Caki2 (cell line): ENCODE measurements at regions of chr12 and their contacts with region 1.

Region 1: DNA sequence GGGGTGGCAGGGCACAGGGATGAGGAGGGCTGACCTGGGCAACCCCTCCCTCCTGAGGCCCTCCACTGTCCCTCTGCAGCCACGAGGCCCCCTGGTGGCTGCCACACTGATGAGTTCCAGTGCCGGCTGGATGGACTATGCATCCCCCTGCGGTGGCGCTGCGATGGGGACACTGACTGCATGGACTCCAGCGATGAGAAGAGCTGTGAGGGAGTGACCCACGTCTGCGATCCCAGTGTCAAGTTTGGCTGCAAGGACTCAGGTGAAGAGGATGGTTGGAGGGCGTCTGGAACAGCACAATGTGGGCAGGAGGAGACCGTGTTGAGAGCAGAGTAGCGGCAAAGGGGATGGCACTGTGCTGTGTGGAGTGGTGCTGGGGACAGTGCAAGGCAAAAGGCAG is 25.7 kb upstream of the LRP1-AS start:
- DNase-seq: peak; percentile 23

Region 2: DNA sequence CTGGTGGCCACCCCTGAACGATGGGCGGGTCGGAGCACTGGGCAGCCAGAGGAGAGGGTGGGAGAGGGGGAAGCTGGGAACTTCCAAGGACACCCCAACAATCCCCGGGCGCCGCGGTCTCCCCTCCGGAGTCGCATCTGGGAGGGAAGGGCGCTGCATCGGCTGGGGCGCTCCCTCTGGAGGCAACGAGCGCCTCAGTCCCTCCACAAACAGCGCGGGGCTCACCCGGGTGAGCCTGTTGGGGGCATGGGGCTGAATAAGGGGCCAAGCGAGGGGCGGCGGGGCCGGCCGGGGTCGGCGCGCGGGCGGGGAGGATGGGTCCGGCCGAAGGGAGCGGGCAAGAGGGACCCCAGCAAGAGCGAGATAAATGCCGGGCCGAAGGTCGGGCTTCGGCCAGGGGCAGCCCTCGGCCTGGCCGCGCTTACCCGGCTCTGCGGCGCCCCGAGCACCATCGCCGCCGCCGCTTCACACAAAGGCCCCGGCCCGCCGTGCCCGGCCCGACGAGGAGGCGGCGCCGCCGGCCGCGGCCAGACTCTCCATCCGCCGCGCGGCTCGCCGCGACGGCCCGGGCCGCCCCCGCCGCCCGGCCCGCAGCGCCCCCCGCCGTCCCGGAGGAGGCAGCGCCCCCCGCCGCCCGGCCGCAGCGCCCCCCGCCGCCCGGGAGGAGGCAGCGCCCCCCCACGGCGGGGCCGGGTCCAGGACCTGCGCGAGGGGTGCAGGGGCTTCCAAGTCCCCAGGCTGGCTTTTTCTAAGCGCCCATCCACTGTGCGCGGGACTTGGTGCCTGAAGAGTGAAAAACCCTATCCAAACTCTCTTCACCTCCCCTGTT is 166.9 kb before region 1 on chr12 and contains the start of gene ZBTB39:
- in situ Hi-C with region 1: no loop called
- DNase-seq: peak; percentile 37
- total RNA-seq, gene ZBTB39: 2.2 and 3.1 TPM in 2 replicates

Region 3: DNA sequence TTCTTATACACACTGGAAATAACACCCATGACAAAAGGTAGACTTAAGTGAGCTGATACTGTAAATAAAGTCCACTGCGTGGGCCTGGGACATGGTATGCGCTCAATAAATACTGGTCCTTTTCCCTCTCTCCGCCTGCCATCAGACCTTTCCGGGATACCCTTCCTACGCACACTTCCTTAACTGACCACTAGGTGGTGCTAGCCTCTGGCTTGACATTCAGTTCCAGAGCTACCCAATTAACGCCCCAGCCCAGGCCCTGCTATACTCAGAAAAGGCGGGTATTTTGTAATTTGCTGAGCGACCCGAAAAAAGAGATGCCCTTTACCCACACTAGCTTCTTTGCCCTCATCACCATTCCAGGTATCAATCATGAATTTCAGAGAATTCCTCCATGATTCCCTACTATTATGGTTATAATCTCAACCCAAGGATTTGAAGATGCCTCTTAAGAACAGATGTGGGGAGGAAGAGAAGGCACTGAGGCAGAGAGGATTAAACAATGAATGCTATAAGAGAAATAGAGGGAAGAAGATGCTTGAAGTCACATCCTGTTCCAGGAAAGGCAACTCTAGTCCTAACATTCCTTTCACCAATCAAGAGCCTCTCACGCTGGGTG is 48.7 kb before region 1 on chr12:
- in situ Hi-C with region 1: loop called (anchors 5 kb)
- DNase-seq: peak; percentile 66

Region 4: DNA sequence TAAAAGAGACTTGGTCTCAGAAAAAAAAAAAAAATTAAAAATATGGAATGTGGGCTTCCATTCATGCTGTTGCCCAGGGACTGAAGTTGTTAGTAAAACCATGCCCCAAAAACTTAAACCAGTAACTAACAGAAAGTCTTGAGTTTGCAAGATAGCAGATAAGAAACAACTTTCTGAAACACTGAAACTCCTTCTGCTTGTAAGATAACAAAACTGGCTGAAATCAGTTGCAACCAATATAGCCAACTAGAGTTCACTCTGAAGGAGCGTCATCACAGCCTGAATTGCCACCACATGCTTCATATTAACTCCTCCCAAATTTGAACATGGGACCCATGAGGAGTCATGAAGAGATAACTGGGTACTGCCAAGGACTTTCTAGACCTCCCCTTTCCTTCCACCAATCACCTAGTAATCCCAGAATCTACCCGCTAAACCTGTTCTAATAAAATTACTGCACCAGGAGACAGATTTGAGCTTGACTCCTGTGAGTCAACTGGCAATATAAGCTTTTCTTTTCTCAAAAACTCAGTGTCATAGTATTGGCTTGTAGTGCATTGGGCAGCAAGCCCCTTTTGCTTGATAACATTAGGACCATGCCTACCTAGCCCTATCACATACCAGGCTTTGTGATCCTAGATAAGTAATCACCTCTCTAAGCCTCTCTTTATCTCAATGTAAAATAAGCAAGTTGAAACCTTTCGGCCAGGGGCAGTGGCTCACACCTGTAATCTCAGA is 204.2 kb after region 1 on chr12:
- in situ Hi-C with region 1: no loop called
- DNase-seq: no peak